Activated CD8-positive, alpha-beta memory T cell treated with anti-CD3 and anti-CD28 coated beads, Interleukin-2, amount 10 ng/mL, durations not matched to agents 7 days and 5 days (primary cell): ENCODE measurements at regions of chr1 and their contacts with region 1.

Region 1: GRCh38 chr1:226444901-226445300 is 37.0 kb upstream of the PARP1 start:
- DNase-seq: peak; percentile 93
- ATAC-seq: peak; percentile 97
- H3K4me3 Mint-ChIP-seq: peak overlapping the region; percentile 23
- H3K27ac Mint-ChIP-seq: peak overlapping the region; percentile 76
- H3K4me1 Mint-ChIP-seq: peaks cover 30% of the 10 kb centered on the region
- H3K27me3 Mint-ChIP-seq: peaks cover 49% of the 10 kb centered on the region

Region 2: DNA sequence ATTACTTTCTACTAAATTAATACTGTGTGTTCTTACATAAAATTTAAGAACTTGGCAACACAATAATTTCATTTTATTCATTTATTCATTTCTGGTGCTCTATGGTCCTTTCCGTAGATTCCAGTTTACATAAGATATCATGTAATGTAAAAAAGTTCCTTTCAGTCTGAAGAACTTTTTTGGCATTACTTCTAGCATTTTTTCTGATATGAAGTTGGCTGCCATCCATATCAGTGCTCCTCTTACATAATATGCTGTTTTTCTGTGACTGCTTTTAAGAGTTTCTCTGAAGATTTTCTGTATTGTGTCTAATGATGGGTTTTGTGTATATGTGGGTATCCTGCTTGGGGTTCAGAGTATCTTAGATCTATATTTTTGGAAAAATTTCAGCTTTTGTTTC is 170.8 kb before region 1 on chr1:
- CTCF ChIA-PET with region 1: no interaction called
- DNase-seq: no peak
- ATAC-seq: no peak
- H3K4me3 Mint-ChIP-seq: no peak overlapping the region
- H3K27ac Mint-ChIP-seq: no peak overlapping the region
- H3K4me1 Mint-ChIP-seq: no peaks in the 10 kb centered on the region
- H3K27me3 Mint-ChIP-seq: no peaks in the 10 kb centered on the region

Region 3: DNA sequence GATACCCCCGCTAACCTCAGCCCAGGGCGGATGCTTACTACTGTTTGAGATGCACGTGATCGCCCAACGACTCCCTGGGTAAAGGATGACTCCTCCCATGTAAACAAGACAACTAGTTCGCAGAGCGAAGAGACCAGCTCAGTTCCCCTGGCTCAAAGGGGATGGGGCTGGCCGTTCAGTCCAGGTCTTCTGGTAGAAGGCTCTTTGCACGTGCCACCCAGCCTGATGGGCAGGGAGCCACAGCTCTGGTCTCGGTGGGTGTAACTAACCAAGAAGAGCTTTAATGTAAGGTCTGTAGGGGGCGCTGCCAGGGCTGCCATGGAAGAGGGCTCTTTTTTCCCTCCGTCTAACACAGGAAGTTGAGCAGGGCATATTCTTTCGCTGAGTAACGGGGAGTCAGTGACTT is 12.4 kb after region 1 on chr1:
- CTCF ChIA-PET with region 1: interaction called, 18 read pairs
- DNase-seq: peak; percentile 75
- ATAC-seq: peak; percentile 92
- H3K4me3 Mint-ChIP-seq: peak overlapping the region; percentile 69
- H3K27ac Mint-ChIP-seq: peak overlapping the region; percentile 87
- H3K4me1 Mint-ChIP-seq: peaks cover 11% of the 10 kb centered on the region
- H3K27me3 Mint-ChIP-seq: peaks cover 2% of the 10 kb centered on the region